Astrocyte of the cerebellum (primary cell): ENCODE measurements at regions of chr7 and their contacts with region 1.

Region 1: DNA sequence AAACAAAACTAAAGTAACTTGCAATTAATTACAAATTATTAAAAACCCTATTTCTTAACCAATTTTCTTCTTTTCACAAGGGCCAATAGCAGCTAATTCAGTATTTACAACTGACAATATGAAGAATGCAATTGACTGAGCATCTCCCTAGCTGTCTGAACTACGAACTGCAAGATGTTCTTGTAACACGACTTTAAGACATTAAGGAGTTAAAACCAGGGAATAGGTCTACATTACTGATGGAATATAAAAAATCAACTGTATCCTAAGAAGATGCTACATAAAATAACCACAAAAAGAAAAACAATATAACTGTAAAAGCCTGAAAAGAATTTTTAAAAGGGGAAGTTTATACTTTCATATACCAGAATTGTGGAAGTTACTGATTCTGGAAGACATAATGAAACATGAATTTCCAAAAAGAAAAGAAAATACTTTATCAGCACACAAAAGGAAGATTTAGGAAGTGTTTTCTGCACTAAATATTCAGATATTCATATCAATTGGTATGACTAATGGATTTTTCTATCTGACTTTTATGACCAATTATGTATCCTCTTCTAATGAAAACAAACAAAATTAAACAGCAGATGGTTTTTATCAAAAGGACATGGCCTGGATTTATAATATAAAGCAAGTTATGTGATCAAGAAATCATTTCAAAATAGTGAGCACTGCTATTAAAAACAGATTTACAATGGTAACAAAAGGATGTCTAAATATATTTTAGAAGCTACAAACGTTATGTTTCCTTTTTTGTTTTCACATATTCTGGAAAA is 1.6 kb downstream of the GPR22 start:
- DNase-seq: no peak
- H3K4me3 ChIP-seq: no peak overlapping the region
- CTCF ChIP-seq: no peak

Region 2: GRCh38 chr7:107168233-107169119 is 303.0 kb before region 1 on chr7 and contains the start of gene HBP1:
- in situ Hi-C with region 1: no loop called
- DNase-seq: peak; percentile 100
- H3K4me3 ChIP-seq: peak within 1 kb of the TSS; percentile 74
- CTCF ChIP-seq: no peak

Region 3: GRCh38 chr7:107404740-107405537 is 66.5 kb before region 1 on chr7:
- in situ Hi-C with region 1: loop called (anchors 10 kb)
- DNase-seq: no peak
- H3K4me3 ChIP-seq: no peak overlapping the region
- CTCF ChIP-seq: no peak

Region 4: DNA sequence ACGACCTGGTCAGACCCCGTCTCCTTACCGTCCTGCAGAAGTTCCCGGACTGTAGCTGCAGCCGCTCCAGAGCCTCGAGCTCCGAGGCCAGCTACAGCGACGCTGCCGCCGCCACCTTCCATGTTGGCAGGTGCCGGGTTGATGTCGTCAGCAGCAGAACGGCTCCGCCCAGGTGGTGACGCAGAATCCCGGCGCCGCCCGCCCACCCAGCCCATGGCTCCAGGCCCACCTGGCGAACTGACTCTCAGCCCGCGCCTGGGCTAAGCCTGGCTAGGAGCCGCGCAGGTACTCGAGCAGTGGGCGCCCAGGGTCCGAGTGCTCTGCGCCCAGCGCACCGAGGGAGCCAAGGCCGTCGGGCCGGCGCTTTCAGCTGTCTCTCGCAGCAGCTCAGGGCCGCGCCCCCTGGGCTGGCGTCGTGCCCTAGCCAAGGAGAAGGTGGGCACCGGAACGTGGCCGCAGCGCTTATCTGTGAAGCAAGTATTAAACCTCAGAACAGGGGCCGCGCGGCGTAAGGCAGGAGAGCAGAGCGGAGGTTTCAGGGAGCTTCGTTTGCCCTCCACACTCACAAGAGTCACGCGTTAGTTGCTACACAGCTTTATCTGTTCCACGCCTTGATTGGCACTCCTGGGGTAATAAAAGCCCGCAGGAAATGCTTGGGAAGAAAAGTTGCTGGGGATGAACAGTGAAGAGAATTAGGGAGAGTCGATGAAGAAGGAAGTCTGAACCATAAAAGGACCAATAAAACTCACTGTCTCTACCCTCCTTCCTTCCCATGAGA is 92.5 kb after region 1 on chr7 and contains the starts of genes COG5 and DUS4L:
- in situ Hi-C with region 1: loop called (anchors 10 kb)
- DNase-seq: peak; percentile 53
- H3K4me3 ChIP-seq: peak within 1 kb of the TSS; percentile 69
- CTCF ChIP-seq: no peak

Region 5: GRCh38 chr7:107592361-107593024 is 121.0 kb after region 1 on chr7:
- in situ Hi-C with region 1: no loop called
- DNase-seq: no peak
- H3K4me3 ChIP-seq: no peak overlapping the region
- CTCF ChIP-seq: no peak

Region 6: DNA sequence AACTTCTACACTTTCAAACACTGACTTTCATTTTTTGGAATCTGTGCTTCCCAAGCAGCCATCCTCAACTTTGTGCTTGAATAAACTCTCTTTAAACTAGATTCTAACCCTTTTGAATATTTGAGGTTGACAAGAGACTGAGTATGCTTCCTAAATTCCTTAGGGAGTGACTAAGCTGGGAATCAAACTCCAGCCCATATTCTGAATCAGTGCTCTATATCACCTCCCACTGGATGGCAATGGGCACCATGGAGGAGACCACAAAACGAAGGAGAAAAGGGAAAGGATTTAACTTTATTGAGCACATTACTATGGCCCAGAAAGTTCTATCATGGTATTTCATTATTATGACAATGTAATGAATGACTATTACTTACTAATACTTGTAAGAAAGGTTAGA is 171.9 kb after region 1 on chr7:
- in situ Hi-C with region 1: no loop called
- DNase-seq: peak; percentile 26
- H3K4me3 ChIP-seq: no peak overlapping the region
- CTCF ChIP-seq: peak; percentile 29